Transverse colon (tissue), 4 donors: ENCODE measurements at regions of chr2 and their contacts with region 1.

Region 1: GRCh38 chr2:216412022-216412999 is at the start of gene SMARCAL1:
- DNase-seq: peak; percentile 99
- H3K4me3 ChIP-seq: peak within 1 kb of the TSS; percentile 53 to 88 (median 70)
- H3K27ac ChIP-seq: peak within 1 kb of the TSS; percentile 91 to 95 (median 93)
- H3K4me1 ChIP-seq: peaks cover 0 to 8% (median 6%) of the 10 kb centered on the region in 4 donors
- H3K27me3 ChIP-seq: peaks cover 5% of the 10 kb centered on the region
- CTCF ChIP-seq: peak in 1 of 5 experiments; percentile 13
- EP300 ChIP-seq: no peak
- POLR2A ChIP-seq: peak; percentile 47
- total RNA-seq, gene SMARCAL1: 16.9 to 32.2 (median 23.6) TPM

Region 2: GRCh38 chr2:215094341-215094740 is 1318.0 kb before region 1 on chr2:
- in situ Hi-C with region 1: no loop called
- intact Hi-C with region 1: no loop called
- DNase-seq: no peak
- H3K4me3 ChIP-seq: no peak overlapping the region
- H3K27ac ChIP-seq: no peak overlapping the region
- H3K4me1 ChIP-seq: no peaks in the 10 kb centered on the region
- H3K27me3 ChIP-seq: no peaks in the 10 kb centered on the region
- CTCF ChIP-seq: no peak
- EP300 ChIP-seq: no peak
- POLR2A ChIP-seq: no peak

Region 3: DNA sequence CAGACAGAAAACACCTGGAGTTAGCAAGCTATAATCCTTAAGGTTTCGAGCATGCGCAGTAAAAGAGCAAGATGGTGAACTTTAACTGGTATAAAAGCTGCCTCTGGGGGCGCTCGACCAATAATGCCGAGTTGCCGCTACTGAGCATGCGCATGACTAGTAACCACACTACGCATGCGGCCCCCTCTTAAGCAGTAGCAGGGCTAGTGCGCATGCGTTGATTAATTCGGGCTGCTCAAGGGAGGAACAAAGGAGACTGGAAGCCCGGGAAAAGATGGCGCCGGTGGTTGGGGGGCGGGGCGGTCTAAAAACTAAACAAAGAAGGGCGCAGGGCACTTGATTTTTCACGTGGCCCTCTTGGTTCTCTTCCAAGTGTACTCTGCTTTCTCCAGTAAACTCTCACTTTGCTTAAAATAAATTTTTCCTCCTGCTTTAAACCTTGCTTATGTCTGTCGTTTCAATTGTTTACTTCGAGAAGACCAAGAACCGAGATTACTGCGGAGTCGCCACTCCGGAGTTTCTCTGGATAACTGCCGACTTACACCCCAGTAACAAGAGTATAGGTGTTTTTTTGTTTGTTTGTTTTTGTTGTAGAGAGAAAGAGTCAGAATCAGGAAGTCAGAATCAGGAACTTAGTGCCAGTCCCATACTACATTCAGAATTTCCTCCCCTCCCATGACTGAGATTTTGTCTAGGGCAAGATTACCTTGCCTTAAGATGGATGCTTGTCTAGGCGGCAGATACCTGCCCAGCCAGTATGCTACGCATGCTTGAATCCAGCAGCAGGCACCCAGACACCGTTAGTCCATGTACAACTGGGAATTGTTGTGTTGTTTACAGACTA is 297.4 kb before region 1 on chr2:
- in situ Hi-C with region 1: loop called in 2 of 4 experiments (anchors 25 kb)
- intact Hi-C with region 1: no loop called
- DNase-seq: peak; percentile 99
- H3K4me3 ChIP-seq: peak overlapping the region; percentile 36 to 61 (median 42)
- H3K27ac ChIP-seq: peak overlapping the region; percentile 79 to 86 (median 84)
- H3K4me1 ChIP-seq: peaks cover 14 to 49% (median 21%) of the 10 kb centered on the region in 4 donors
- H3K27me3 ChIP-seq: no peaks in the 10 kb centered on the region
- CTCF ChIP-seq: peak; percentile 80 to 94 (median 87)
- EP300 ChIP-seq: no peak
- POLR2A ChIP-seq: no peak

Region 4: GRCh38 chr2:216222650-216223352 is 189.5 kb before region 1 on chr2:
- in situ Hi-C with region 1: no loop called
- intact Hi-C with region 1: no loop called
- DNase-seq: no peak
- H3K4me3 ChIP-seq: no peak overlapping the region
- H3K27ac ChIP-seq: no peak overlapping the region
- H3K4me1 ChIP-seq: no peaks in the 10 kb centered on the region
- H3K27me3 ChIP-seq: no peaks in the 10 kb centered on the region
- CTCF ChIP-seq: no peak
- EP300 ChIP-seq: no peak
- POLR2A ChIP-seq: no peak

Region 5: DNA sequence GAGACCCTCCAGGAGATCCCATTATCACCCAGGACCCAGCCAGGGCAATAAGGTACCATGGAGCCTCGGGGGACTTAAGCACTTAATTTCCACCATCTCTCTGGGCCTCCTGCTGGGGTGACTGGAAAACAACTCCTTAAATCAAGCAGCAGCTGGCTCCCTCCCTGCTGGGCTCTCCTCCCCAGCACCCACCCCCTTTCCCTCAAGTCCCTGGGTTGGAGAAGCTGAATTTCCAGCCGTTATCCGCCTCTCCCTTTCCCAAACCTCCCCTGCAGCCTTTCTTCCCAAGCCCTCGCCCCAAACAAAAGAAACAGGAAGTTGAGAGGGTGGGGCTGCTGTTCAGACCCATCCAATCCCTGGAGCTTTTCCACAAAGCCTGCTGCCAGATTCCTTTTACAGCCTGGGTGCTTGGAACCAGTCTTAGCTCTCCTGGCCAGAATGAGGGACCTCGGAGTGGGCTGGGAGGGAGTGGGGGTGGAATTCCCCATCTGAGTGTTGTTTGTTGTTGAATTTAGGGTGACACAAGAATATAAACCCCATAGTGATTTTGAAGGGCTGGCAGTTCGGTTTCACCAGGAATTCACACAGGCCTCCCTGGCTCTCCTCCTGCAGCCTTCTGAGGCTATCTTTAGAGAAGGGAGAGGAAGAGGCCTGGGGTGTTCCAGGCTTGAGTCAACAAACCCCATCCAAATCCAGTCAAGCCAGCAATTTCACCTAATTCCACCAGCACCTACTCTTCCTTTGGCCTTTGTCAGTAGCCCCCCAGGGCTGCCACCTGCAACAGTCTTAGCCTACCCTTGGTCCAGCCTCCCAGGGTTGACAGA is 72.3 kb before region 1 on chr2:
- in situ Hi-C with region 1: no loop called
- intact Hi-C with region 1: no loop called
- DNase-seq: no peak
- H3K4me3 ChIP-seq: no peak overlapping the region
- H3K27ac ChIP-seq: no peak overlapping the region
- H3K4me1 ChIP-seq: peaks cover 0 to 7% (median 2%) of the 10 kb centered on the region in 4 donors
- H3K27me3 ChIP-seq: no peaks in the 10 kb centered on the region
- CTCF ChIP-seq: no peak
- EP300 ChIP-seq: no peak
- POLR2A ChIP-seq: no peak